Activated CD4-positive, alpha-beta T cell treated with anti-CD3 and anti-CD28 coated beads, Interleukin-2, amount 10 ng/mL, durations not matched to agents 7 days and 5 days (primary cell): ENCODE measurements at regions of chr20 and their contacts with region 1.

Region 1: GRCh38 chr20:44310664-44311639 is at the start of gene FITM2:
- DNase-seq: peak; percentile 99
- H3K4me3 Mint-ChIP-seq: peak within 1 kb of the TSS; percentile 91
- H3K27ac Mint-ChIP-seq: peak within 1 kb of the TSS; percentile 94
- H3K4me1 Mint-ChIP-seq: peaks cover 20% of the 10 kb centered on the region
- H3K27me3 Mint-ChIP-seq: no peaks in the 10 kb centered on the region
- total RNA-seq, gene FITM2: 4.8 to 4.9 TPM

Region 2: GRCh38 chr20:44217342-44218092 is 93.4 kb before region 1 on chr20:
- CTCF ChIA-PET with region 1: interaction called, 144 read pairs
- POLR2A ChIA-PET with region 1: interaction called, 3 read pairs
- DNase-seq: peak; percentile 84
- H3K4me3 Mint-ChIP-seq: peak overlapping the region; percentile 73
- H3K27ac Mint-ChIP-seq: peak overlapping the region; percentile 95
- H3K4me1 Mint-ChIP-seq: peaks cover 58% of the 10 kb centered on the region
- H3K27me3 Mint-ChIP-seq: no peaks in the 10 kb centered on the region

Region 3: GRCh38 chr20:44222633-44223368 is 88.2 kb before region 1 on chr20:
- CTCF ChIA-PET with region 1: interaction called, 144 read pairs
- POLR2A ChIA-PET with region 1: interaction called, 3 read pairs
- DNase-seq: no peak
- H3K4me3 Mint-ChIP-seq: no peak overlapping the region
- H3K27ac Mint-ChIP-seq: peak overlapping the region; percentile 71
- H3K4me1 Mint-ChIP-seq: peaks cover 32% of the 10 kb centered on the region
- H3K27me3 Mint-ChIP-seq: no peaks in the 10 kb centered on the region

Region 4: GRCh38 chr20:44326391-44327159 is 15.6 kb after region 1 on chr20:
- CTCF ChIA-PET with region 1: interaction called, 19 read pairs
- POLR2A ChIA-PET with region 1: no interaction called
- DNase-seq: no peak
- H3K4me3 Mint-ChIP-seq: peak overlapping the region; percentile 30
- H3K27ac Mint-ChIP-seq: no peak overlapping the region
- H3K4me1 Mint-ChIP-seq: peaks cover 2% of the 10 kb centered on the region
- H3K27me3 Mint-ChIP-seq: peaks cover 7% of the 10 kb centered on the region